ENCODE measurements at regions of chr17 and their contacts with region 1.

Region 1: DNA sequence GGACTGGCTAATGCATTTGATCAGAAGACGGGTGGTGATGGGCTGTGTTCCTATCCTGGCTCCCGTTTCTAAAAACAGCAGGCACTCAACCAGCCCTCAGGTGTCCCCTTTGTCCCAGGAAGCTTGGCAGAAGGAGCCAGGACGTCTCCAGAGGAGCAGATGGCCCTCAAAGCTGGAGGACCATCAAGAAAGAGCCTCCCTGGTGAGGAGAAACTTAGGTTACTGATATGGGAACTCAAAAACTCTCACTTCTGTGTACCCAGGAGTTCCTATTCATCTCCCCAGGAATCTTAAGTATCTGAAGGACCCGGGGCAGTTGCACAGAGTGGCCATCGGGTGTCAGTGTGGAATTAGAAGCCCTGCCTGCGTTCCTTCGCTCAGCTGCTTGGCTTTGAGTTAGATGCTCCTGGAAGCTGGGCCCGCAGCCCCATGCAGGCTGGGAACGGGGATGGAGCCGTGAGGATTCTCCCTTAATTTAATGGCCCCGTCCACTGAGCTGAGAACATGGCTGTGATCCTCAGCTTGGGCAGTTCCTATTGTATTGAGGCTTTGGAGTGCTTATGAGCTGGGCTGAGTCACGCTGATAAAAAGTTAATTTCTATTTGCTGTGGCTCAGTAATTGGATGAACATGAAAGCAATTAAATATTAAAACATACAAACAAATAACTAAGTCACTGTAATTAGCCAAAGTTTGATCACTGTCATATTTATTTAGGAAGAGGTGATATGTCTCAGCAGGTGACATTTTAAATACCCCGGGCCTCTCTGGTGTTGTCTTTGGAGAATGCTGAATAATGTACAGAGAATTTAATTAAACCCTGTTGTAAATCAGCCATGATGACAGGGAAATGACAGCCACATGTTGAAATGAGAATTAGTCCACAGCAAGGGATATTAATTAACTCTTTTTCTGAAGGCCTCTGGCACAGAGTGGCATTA is 402.1 kb downstream of the SEC14L1 start:
- DNase-seq: peak; percentile 60
- H3K4me3 ChIP-seq: no peak overlapping the region
- H3K27ac ChIP-seq: no peak overlapping the region
- H3K4me1 ChIP-seq: no peaks in the 10 kb centered on the region
- H3K27me3 ChIP-seq: no peaks in the 10 kb centered on the region
- CTCF ChIP-seq: peak; percentile 96 to 99

Region 2: GRCh38 chr17:77594416-77595209 is 51.8 kb after region 1 on chr17:
- CTCF ChIA-PET with region 1: no interaction called
- dilution Hi-C with region 1: loop called (anchors 5 kb)
- in situ Hi-C with region 1: no loop called
- intact Hi-C with region 1: no loop called
- DNase-seq: no peak
- H3K4me3 ChIP-seq: no peak overlapping the region
- H3K27ac ChIP-seq: no peak overlapping the region
- H3K4me1 ChIP-seq: no peaks in the 10 kb centered on the region
- H3K27me3 ChIP-seq: no peaks in the 10 kb centered on the region
- CTCF ChIP-seq: no peak

Region 3: DNA sequence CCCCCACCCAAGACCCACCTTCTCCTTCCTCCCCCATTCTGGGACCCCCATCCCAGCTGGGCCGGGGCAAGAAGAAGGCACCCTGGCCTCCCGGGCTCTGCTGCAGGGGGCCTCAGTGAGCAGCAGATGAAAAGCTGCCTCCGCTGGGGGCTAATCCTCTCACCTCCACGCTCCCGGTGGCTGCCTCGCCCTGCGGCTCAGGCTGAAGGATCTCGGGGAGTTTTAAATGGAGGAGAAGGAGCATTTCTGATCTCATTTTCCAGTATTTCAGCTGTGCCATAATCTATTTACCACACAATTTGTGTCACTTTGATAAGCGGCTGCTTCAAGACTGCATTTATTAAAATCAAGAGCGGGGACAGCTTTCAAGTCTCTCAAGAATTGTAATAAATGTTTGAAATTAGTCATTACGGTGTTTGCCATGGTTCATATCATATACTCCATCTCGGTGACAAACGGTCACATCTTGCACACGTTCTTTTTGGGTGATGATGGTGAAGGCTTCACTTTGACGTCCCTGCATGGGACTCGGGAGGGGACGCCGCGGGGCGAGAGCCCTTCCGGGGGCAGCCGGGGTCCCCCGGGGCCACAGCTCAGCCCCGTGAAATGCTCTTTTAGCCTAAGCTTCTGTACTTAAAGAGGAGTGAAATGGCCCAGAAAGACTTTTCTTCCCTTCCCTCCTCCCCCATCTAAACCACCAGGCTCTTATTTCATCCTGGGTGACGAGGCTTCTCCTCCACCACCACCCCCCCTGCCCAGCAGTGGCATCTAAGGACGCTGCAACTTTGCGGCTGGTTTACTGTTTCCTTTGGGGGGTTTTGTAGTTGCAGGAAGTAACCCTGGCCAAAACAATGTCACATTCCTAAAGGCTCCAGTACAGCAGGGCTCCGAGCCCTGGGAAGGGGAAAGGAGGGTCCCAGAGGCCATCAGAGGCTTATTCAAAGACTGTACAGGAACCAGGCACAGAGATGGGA is 102.5 kb after region 1 on chr17:
- CTCF ChIA-PET with region 1: interaction called, 8 read pairs
- dilution Hi-C with region 1: loop called (anchors 5 kb)
- in situ Hi-C with region 1: no loop called
- intact Hi-C with region 1: loop called (anchors 1 kb)
- DNase-seq: no peak
- H3K4me3 ChIP-seq: no peak overlapping the region
- H3K27ac ChIP-seq: no peak overlapping the region
- H3K4me1 ChIP-seq: no peaks in the 10 kb centered on the region
- H3K27me3 ChIP-seq: peaks cover 3% of the 10 kb centered on the region
- CTCF ChIP-seq: no peak

Region 4: DNA sequence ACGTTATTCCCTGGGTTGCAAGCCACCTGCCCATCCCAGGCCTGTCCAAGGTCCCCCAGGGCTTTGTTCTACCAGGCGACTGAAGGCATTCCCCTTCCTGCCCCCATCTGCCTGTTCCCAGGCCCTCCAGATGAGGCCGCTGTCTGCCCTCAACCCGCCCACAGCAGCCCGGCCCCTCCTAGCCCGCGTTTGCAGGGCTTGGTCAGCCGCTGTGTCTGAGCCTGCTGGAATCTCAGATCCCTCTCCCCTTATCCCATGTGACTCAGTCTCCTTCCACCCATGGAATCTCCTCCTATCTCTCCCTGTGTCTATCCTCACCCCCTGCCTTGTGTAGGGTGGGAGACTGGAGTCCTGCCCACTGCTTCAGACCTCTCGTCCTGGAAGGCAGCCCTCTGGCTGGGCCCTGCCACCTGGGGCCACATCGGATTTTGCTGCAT is 229.7 kb after region 1 on chr17:
- CTCF ChIA-PET with region 1: no interaction called
- dilution Hi-C with region 1: no loop called
- in situ Hi-C with region 1: no loop called
- intact Hi-C with region 1: loop called (anchors 1 kb)
- DNase-seq: no peak
- H3K4me3 ChIP-seq: no peak overlapping the region
- H3K27ac ChIP-seq: no peak overlapping the region
- H3K4me1 ChIP-seq: no peaks in the 10 kb centered on the region
- H3K27me3 ChIP-seq: no peaks in the 10 kb centered on the region
- CTCF ChIP-seq: peak; percentile 40 to 73

Region 5: GRCh38 chr17:77821097-77821496 is 278.3 kb after region 1 on chr17:
- CTCF ChIA-PET with region 1: no interaction called
- dilution Hi-C with region 1: no loop called
- in situ Hi-C with region 1: no loop called
- intact Hi-C with region 1: loop called (anchors 5 kb)
- DNase-seq: no peak
- H3K4me3 ChIP-seq: no peak overlapping the region
- H3K27ac ChIP-seq: no peak overlapping the region
- H3K4me1 ChIP-seq: no peaks in the 10 kb centered on the region
- H3K27me3 ChIP-seq: peaks cover 2% of the 10 kb centered on the region
- CTCF ChIP-seq: no peak

Region 6: GRCh38 chr17:77909236-77909635 is 366.4 kb after region 1 on chr17:
- CTCF ChIA-PET with region 1: no interaction called
- dilution Hi-C with region 1: no loop called
- in situ Hi-C with region 1: no loop called
- intact Hi-C with region 1: loop called (anchors 10 kb)
- DNase-seq: no peak
- H3K4me3 ChIP-seq: no peak overlapping the region
- H3K27ac ChIP-seq: no peak overlapping the region
- H3K4me1 ChIP-seq: peaks cover 3% of the 10 kb centered on the region
- H3K27me3 ChIP-seq: peaks cover 6% of the 10 kb centered on the region
- CTCF ChIP-seq: no peak

Measured in mammary epithelial cell (primary cell).